ENCODE measurements at regions of chr6 and their contacts with region 1.

Region 1: GRCh38 chr6:34176261-34177031 is 30.6 kb upstream of the GRM4 start:
- DNase-seq: no peak
- ATAC-seq: no peak
- H3K4me3 ChIP-seq: no peak overlapping the region
- H3K27ac ChIP-seq: no peak overlapping the region
- H3K4me1 ChIP-seq: no peaks in the 10 kb centered on the region
- CTCF ChIP-seq: no peak
- EP300 ChIP-seq: no peak
- POLR2A ChIP-seq: no peak
- RAD21 ChIP-seq: no peak

Region 2: GRCh38 chr6:33875141-33875581 is 301.3 kb before region 1 on chr6:
- CTCF ChIA-PET with region 1: no interaction called
- POLR2A ChIA-PET with region 1: no interaction called
- DNase-seq: no peak
- ATAC-seq: no peak
- H3K4me3 ChIP-seq: no peak overlapping the region
- H3K27ac ChIP-seq: no peak overlapping the region
- H3K4me1 ChIP-seq: no peaks in the 10 kb centered on the region
- CTCF ChIP-seq: no peak
- EP300 ChIP-seq: no peak
- POLR2A ChIP-seq: no peak
- RAD21 ChIP-seq: no peak

Region 3: GRCh38 chr6:34161857-34162515 is 14.5 kb before region 1 on chr6:
- CTCF ChIA-PET with region 1: interaction called, 16 read pairs
- POLR2A ChIA-PET with region 1: no interaction called
- DNase-seq: no peak
- ATAC-seq: no peak
- H3K4me3 ChIP-seq: no peak overlapping the region
- H3K27ac ChIP-seq: no peak overlapping the region
- H3K4me1 ChIP-seq: no peaks in the 10 kb centered on the region
- CTCF ChIP-seq: no peak
- EP300 ChIP-seq: no peak
- POLR2A ChIP-seq: no peak
- RAD21 ChIP-seq: no peak

Region 4: DNA sequence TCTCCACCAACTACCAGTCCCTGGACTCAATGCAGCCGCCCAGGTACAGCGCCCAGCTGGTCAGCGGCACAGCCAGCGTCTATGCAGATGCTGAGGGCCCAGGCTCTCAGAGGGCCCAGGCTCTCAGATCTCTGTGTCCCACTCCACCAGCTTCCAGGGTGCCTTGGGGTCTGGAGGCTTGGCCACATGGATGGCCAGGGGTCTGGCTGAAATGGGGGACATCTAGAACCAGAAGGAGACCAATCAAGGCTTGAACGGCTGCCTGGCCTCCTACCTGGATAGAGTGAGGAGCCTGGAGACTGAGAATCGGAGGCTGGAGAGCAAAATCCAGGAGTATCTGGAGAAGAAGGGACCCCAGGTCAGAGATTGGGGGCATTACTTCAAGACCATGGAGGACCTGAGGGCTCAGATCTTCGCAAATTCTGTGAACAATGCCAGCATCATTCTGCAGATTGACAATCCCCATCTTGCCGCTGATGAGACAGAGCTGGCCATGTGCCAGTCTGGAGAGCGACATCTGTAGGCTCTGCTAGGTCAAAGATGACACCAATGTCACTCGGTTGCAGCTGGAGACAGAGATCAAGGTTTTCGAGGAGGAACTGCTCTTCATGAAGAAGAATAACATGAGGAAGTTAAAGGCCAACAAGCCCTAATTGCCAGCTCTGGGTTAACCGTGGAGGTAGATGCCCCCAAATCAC is 13.5 kb after region 1 on chr6:
- CTCF ChIA-PET with region 1: no interaction called
- POLR2A ChIA-PET with region 1: no interaction called
- DNase-seq: no peak
- ATAC-seq: no peak
- H3K4me3 ChIP-seq: no peak overlapping the region
- H3K27ac ChIP-seq: no peak overlapping the region
- H3K4me1 ChIP-seq: no peaks in the 10 kb centered on the region
- CTCF ChIP-seq: no peak
- EP300 ChIP-seq: no peak
- POLR2A ChIP-seq: no peak
- RAD21 ChIP-seq: no peak

Measured in A549 (cell line).